ENCODE measurements at regions of chr22 and their contacts with region 1.

Region 1: GRCh38 chr22:39932918-39933649 is 27.1 kb upstream of the TMA7B start:
- DNase-seq: peak; percentile 89
- ATAC-seq: peak; percentile 95
- H3K4me3 Mint-ChIP-seq: no peak overlapping the region
- H3K27ac Mint-ChIP-seq: peak overlapping the region; percentile 48
- H3K4me1 Mint-ChIP-seq: peaks cover 48% of the 10 kb centered on the region
- H3K27me3 Mint-ChIP-seq: no peaks in the 10 kb centered on the region; the same call in 1 of the 2 replicates
- CTCF ChIP-seq: peak; percentile 97

Region 2: GRCh38 chr22:39920134-39920743 is 12.8 kb before region 1 on chr22:
- CTCF ChIA-PET with region 1: interaction called, 34 read pairs
- POLR2A ChIA-PET with region 1: no interaction called
- DNase-seq: no peak
- ATAC-seq: no peak
- H3K4me3 Mint-ChIP-seq: no peak overlapping the region
- H3K27ac Mint-ChIP-seq: no peak overlapping the region
- H3K4me1 Mint-ChIP-seq: peaks cover 12% of the 10 kb centered on the region
- H3K27me3 Mint-ChIP-seq: no peaks in the 10 kb centered on the region
- CTCF ChIP-seq: no peak

Region 3: DNA sequence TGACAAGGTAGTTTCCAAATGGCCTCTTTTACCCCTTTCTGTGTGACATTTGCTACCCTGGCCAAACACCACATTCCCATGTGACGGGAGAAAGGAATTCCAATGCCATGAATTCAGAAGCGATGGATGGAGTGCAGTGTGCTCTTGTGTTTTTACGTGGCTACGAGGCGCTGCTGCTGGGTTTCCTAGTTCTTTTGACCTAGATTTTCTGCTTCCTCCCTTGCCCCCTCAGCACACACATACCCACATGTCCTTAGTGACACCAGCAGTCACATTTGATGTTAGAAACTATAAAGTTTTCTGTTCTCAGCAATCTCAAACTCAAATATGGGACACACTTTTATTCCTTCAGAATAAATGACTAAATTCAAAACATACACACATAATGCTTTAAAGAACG is 19.3 kb after region 1 on chr22:
- CTCF ChIA-PET with region 1: interaction called, 38 read pairs
- POLR2A ChIA-PET with region 1: interaction called, 4 read pairs
- DNase-seq: no peak
- ATAC-seq: no peak
- H3K4me3 Mint-ChIP-seq: no peak overlapping the region
- H3K27ac Mint-ChIP-seq: no peak overlapping the region
- H3K4me1 Mint-ChIP-seq: peaks cover 23% of the 10 kb centered on the region
- H3K27me3 Mint-ChIP-seq: peaks cover 6% of the 10 kb centered on the region; the same call in 1 of the 2 replicates
- CTCF ChIP-seq: no peak

Region 4: GRCh38 chr22:40009292-40009769 is 76.2 kb after region 1 on chr22:
- CTCF ChIA-PET with region 1: interaction called, 26 read pairs
- POLR2A ChIA-PET with region 1: no interaction called
- DNase-seq: peak; percentile 63
- ATAC-seq: peak; percentile 79
- H3K4me3 Mint-ChIP-seq: peak overlapping the region; percentile 29
- H3K27ac Mint-ChIP-seq: peak overlapping the region; percentile 70; the same call in 1 of the 2 replicates
- H3K4me1 Mint-ChIP-seq: peaks cover 57% of the 10 kb centered on the region
- H3K27me3 Mint-ChIP-seq: no peaks in the 10 kb centered on the region
- CTCF ChIP-seq: no peak

Region 5: DNA sequence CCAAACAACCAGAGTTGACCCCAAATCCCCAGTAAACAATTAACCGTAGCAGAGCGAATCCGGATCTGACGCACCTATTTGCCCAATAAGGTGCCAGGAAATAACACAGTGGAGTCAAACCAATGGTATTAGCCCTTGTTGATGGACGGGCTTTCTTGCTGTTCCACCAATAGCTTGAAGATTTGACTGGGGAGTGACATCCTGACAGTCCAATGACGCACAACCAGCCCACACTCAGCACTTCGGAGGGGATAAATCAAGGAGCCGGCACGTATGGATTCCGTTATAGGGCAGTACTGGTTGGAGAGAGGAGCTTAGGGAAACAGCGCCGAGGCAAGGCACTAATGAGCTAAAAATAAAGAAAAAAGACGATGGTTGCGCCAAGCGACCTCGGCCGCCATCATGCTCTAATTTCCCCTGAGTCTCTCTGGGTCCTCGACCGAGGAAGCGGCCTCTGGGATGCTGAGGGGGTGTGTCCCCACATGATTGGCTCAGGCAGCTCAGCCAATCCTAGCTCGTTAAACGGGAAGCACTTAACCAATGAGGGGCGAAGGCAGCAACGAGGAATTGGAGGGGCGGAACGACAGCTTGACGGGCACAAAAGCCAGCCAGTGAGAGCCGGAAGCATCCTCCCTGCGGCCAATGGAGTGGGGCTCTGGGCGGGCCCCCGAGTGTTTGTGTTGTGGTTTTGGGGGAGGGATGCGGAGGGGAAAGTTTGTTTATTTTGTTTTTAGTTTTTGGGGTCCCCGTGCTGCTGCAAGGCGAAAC is 111.2 kb after region 1 on chr22:
- CTCF ChIA-PET with region 1: interaction called, 12 read pairs
- POLR2A ChIA-PET with region 1: interaction called, 3 read pairs
- DNase-seq: peak; percentile 98
- ATAC-seq: peak; percentile 91
- H3K4me3 Mint-ChIP-seq: peak overlapping the region; percentile 93
- H3K27ac Mint-ChIP-seq: peak overlapping the region; percentile 99
- H3K4me1 Mint-ChIP-seq: peaks cover 16% of the 10 kb centered on the region
- H3K27me3 Mint-ChIP-seq: peaks cover 17% of the 10 kb centered on the region
- CTCF ChIP-seq: no peak

Measured in WTC11 (cell line).